ENCODE measurements at regions of chr17 and their contacts with region 1.

Region 1: GRCh38 chr17:82037113-82037888 is at the start of gene DCXR:
- DNase-seq: peak; percentile 85 to 97 (median 94)
- ATAC-seq: peak; percentile 90
- H3K4me3 ChIP-seq: peak within 1 kb of the TSS; percentile 65
- H3K4me3 Mint-ChIP-seq: peak within 1 kb of the TSS; percentile 96
- H3K27ac ChIP-seq: peak within 1 kb of the TSS; percentile 45 to 55
- H3K27ac Mint-ChIP-seq: peak within 1 kb of the TSS; percentile 84
- H3K4me1 ChIP-seq: peaks cover 27% of the 10 kb centered on the region
- H3K4me1 Mint-ChIP-seq: peaks cover 26% of the 10 kb centered on the region
- H3K27me3 ChIP-seq: no peaks in the 10 kb centered on the region
- H3K27me3 Mint-ChIP-seq: no peaks in the 10 kb centered on the region
- CTCF ChIP-seq: peak; percentile 87
- total RNA-seq, gene DCXR: 103 to 119 TPM

Region 2: GRCh38 chr17:81959362-81960129 is 77.8 kb before region 1 on chr17:
- CTCF ChIA-PET with region 1: interaction called, 12 read pairs
- POLR2A ChIA-PET with region 1: interaction called, 8 read pairs
- intact Hi-C with region 1: no loop called
- DNase-seq: peak; percentile 67 to 96 (median 81)
- ATAC-seq: peak; percentile 97
- H3K4me3 ChIP-seq: peak overlapping the region; percentile 24
- H3K4me3 Mint-ChIP-seq: peak overlapping the region; percentile 34
- H3K27ac ChIP-seq: no peak overlapping the region
- H3K27ac Mint-ChIP-seq: no peak overlapping the region
- H3K4me1 ChIP-seq: peaks cover 21% of the 10 kb centered on the region
- H3K4me1 Mint-ChIP-seq: no peaks in the 10 kb centered on the region
- H3K27me3 ChIP-seq: peaks cover 26 to 31% of the 10 kb centered on the region in 2 experiments
- H3K27me3 Mint-ChIP-seq: peaks cover 14% of the 10 kb centered on the region
- CTCF ChIP-seq: peak; percentile 65

Region 3: GRCh38 chr17:82098072-82098821 is 60.9 kb after region 1 on chr17 and contains the start of gene FASN:
- CTCF ChIA-PET with region 1: interaction called, 3 read pairs
- POLR2A ChIA-PET with region 1: interaction called, 17 read pairs
- intact Hi-C with region 1: no loop called
- DNase-seq: peak; percentile 80 to 97 (median 91)
- ATAC-seq: peak; percentile 68
- H3K4me3 ChIP-seq: peak within 1 kb of the TSS; percentile 54
- H3K4me3 Mint-ChIP-seq: peak within 1 kb of the TSS; percentile 83
- H3K27ac ChIP-seq: peak within 1 kb of the TSS; percentile 58 to 73
- H3K27ac Mint-ChIP-seq: peak within 1 kb of the TSS; percentile 80
- H3K4me1 ChIP-seq: peaks cover 28% of the 10 kb centered on the region
- H3K4me1 Mint-ChIP-seq: peaks cover 3% of the 10 kb centered on the region
- H3K27me3 ChIP-seq: no peaks in the 10 kb centered on the region
- H3K27me3 Mint-ChIP-seq: no peaks in the 10 kb centered on the region
- CTCF ChIP-seq: no peak
- total RNA-seq, gene FASN: 168 to 174 TPM

Region 4: GRCh38 chr17:82120148-82120547 is 82.8 kb after region 1 on chr17:
- CTCF ChIA-PET with region 1: no interaction called
- POLR2A ChIA-PET with region 1: interaction called, 15 read pairs
- intact Hi-C with region 1: loop called in 1 of 2 experiments (anchors 10 kb)
- DNase-seq: peak in 7 of 14 experiments; percentile 37 to 72 (median 54)
- ATAC-seq: peak; percentile 93
- H3K4me3 ChIP-seq: no peak overlapping the region
- H3K4me3 Mint-ChIP-seq: peak overlapping the region; percentile 52
- H3K27ac ChIP-seq: no peak overlapping the region
- H3K27ac Mint-ChIP-seq: peak overlapping the region; percentile 92
- H3K4me1 ChIP-seq: peaks cover 56% of the 10 kb centered on the region
- H3K4me1 Mint-ChIP-seq: peaks cover 62% of the 10 kb centered on the region
- H3K27me3 ChIP-seq: no peaks in the 10 kb centered on the region
- H3K27me3 Mint-ChIP-seq: no peaks in the 10 kb centered on the region
- CTCF ChIP-seq: no peak

Region 5: DNA sequence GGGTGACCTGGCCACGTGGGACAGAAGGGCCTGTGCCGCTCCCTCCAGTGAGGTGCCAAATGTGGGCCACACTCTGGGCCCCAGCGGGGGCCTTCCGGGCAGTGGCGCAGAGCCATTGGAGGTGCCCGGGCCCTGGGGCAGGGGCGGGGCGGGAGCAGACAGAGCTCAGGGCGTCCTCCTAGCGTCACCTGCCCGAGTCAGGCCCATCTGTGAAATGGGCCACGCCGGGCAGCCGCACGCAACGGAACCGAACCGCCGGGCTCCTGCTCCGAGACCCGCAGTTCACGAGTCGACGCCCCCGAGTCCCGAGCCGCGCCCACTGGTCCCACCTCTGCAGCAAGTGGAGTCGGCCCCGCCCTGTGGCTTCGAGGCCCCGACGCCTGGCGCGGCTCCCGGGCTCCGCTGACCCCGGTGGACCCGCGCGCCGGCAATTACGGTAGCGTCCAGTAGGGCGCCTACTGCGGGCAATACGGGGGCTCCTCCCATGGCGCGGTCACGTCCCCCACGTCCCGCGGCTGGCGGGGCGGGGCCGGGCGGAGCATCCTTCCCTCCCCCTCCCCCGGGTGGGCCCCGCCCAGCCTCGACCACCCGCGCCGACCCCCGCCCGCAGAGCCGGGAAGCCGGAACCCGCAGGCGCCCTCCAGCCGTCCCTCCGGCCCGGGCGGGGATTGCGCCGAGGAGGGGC is 193.5 kb after region 1 on chr17:
- CTCF ChIA-PET with region 1: no interaction called
- POLR2A ChIA-PET with region 1: interaction called, 5 read pairs
- intact Hi-C with region 1: loop called in 1 of 2 experiments (anchors 10 kb)
- DNase-seq: peak in 7 of 14 experiments; percentile 39 to 79 (median 57)
- ATAC-seq: peak; percentile 24
- H3K4me3 ChIP-seq: peak overlapping the region; percentile 48
- H3K4me3 Mint-ChIP-seq: no peak overlapping the region
- H3K27ac ChIP-seq: peak overlapping the region in 1 of 2 donors; percentile 38
- H3K27ac Mint-ChIP-seq: peak overlapping the region; percentile 84
- H3K4me1 ChIP-seq: peaks cover 54% of the 10 kb centered on the region
- H3K4me1 Mint-ChIP-seq: peaks cover 21% of the 10 kb centered on the region
- H3K27me3 ChIP-seq: no peaks in the 10 kb centered on the region
- H3K27me3 Mint-ChIP-seq: no peaks in the 10 kb centered on the region
- CTCF ChIP-seq: no peak

Region 6: GRCh38 chr17:82418001-82418986 is 381.0 kb after region 1 on chr17 and contains the starts of genes HEXD and OGFOD3:
- CTCF ChIA-PET with region 1: no interaction called
- POLR2A ChIA-PET with region 1: no interaction called
- intact Hi-C with region 1: loop called (anchors 5 to 10 kb)
- DNase-seq: peak; percentile 69 to 95 (median 83)
- ATAC-seq: peak; percentile 85
- H3K4me3 ChIP-seq: peak within 1 kb of the TSS; percentile 76
- H3K4me3 Mint-ChIP-seq: peak within 1 kb of the TSS; percentile 85
- H3K27ac ChIP-seq: peak within 1 kb of the TSS; percentile 35 to 50
- H3K27ac Mint-ChIP-seq: peak within 1 kb of the TSS; percentile 78
- H3K4me1 ChIP-seq: peaks cover 30% of the 10 kb centered on the region
- H3K4me1 Mint-ChIP-seq: peaks cover 32% of the 10 kb centered on the region
- H3K27me3 ChIP-seq: no peaks in the 10 kb centered on the region
- H3K27me3 Mint-ChIP-seq: no peaks in the 10 kb centered on the region
- CTCF ChIP-seq: no peak
- total RNA-seq, gene HEXD: 27.8 to 31.2 TPM
- total RNA-seq, gene OGFOD3: 12.9 to 13.7 TPM